Left ventricle myocardium inferior (tissue), 1 donor: ENCODE measurements at regions of chr6 and their contacts with region 1.

Region 1: GRCh38 chr6:116287689-116288282 is 8.1 kb upstream of the TSPYL1 start:
- DNase-seq: no peak
- H3K4me3 ChIP-seq: no peak overlapping the region
- H3K27ac ChIP-seq: no peak overlapping the region
- H3K4me1 ChIP-seq: no peaks in the 10 kb centered on the region
- H3K27me3 ChIP-seq: no peaks in the 10 kb centered on the region
- CTCF ChIP-seq: peak; percentile 95

Region 2: GRCh38 chr6:116144605-116145004 is 143.2 kb before region 1 on chr6:
- intact Hi-C with region 1: no loop called
- DNase-seq: no peak
- H3K4me3 ChIP-seq: no peak overlapping the region
- H3K27ac ChIP-seq: no peak overlapping the region
- H3K4me1 ChIP-seq: peaks cover 29% of the 10 kb centered on the region
- H3K27me3 ChIP-seq: no peaks in the 10 kb centered on the region
- CTCF ChIP-seq: no peak

Region 3: DNA sequence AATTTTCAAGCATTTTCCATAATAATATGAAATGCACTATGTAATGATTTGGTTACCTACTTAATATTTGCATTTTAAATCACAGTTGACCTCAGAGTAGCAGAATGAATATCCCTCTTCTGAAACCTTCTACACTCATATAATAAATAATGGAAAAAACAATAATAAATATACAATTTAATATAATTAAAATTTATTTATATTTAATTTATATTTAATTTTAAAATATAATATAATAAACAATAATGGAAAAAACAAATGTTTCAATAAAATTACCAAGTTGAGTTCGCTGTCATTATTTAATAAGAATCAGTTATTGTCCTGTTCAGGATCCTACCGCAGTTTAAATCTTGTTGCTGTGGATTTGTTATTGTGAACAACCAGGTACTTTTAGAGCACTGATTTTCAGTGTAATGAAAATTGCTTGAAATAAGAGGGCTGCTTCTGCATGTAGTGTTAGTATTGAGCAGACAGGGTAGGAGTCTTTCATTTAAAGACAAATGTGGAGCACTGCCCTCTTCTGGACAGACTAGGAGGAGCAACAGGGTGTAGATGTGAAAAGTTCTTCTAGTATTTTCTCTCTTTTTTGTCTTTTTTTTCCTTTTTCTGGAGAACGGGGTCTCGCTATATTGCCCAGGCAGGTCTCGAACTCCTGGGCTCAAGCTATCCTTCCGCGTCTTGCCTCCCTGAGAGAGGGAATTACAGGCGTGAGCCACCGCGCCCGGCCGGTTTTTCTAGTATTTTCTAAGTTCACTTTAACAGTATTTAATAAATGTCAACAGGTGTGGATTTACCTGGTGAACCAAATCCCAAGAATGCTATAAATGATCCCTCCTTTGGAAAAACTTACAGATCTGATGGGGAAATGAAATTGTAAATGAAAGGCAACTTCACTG is 244.1 kb after region 1 on chr6:
- intact Hi-C with region 1: loop called (anchors 5 kb)
- DNase-seq: peak; percentile 26
- H3K4me3 ChIP-seq: no peak overlapping the region
- H3K27ac ChIP-seq: no peak overlapping the region
- H3K4me1 ChIP-seq: peaks cover 22% of the 10 kb centered on the region
- H3K27me3 ChIP-seq: no peaks in the 10 kb centered on the region
- CTCF ChIP-seq: peak; percentile 93